ENCODE measurements at regions of chr22 and their contacts with region 1.

Region 1: GRCh38 chr22:39170825-39171622 is 18.5 kb upstream of the CBX7 start:
- DNase-seq: peak; percentile 53
- ATAC-seq: peak; percentile 96
- H3K4me3 ChIP-seq: no peak overlapping the region
- H3K27ac ChIP-seq: no peak overlapping the region
- H3K4me1 ChIP-seq: peaks cover 15% of the 10 kb centered on the region
- H3K27me3 ChIP-seq: no peaks in the 10 kb centered on the region; a peak in 1 of 4 replicates
- CTCF ChIP-seq: peak; percentile 90 to 94 (median 93); a peak in 5 of 6 replicates
- EP300 ChIP-seq: no peak
- POLR2A ChIP-seq: no peak
- RAD21 ChIP-seq: peak; percentile 95

Region 2: GRCh38 chr22:39215426-39216120 is 44.5 kb after region 1 on chr22:
- CTCF ChIA-PET with region 1: interaction called, 20 read pairs
- POLR2A ChIA-PET with region 1: no interaction called
- RAD21 ChIA-PET with region 1: no interaction called
- SMC1A ChIA-PET with region 1: no interaction called
- in situ Hi-C with region 1: no loop called
- intact Hi-C with region 1: no loop called
- DNase-seq: no peak
- ATAC-seq: peak; percentile 80
- H3K4me3 ChIP-seq: no peak overlapping the region
- H3K27ac ChIP-seq: no peak overlapping the region
- H3K4me1 ChIP-seq: no peaks in the 10 kb centered on the region
- H3K27me3 ChIP-seq: no peaks in the 10 kb centered on the region; a peak in 1 of 4 replicates
- CTCF ChIP-seq: peak; percentile 37 to 56 (median 47); a peak in 5 of 6 replicates
- EP300 ChIP-seq: no peak
- POLR2A ChIP-seq: no peak
- RAD21 ChIP-seq: peak; percentile 49

Region 3: DNA sequence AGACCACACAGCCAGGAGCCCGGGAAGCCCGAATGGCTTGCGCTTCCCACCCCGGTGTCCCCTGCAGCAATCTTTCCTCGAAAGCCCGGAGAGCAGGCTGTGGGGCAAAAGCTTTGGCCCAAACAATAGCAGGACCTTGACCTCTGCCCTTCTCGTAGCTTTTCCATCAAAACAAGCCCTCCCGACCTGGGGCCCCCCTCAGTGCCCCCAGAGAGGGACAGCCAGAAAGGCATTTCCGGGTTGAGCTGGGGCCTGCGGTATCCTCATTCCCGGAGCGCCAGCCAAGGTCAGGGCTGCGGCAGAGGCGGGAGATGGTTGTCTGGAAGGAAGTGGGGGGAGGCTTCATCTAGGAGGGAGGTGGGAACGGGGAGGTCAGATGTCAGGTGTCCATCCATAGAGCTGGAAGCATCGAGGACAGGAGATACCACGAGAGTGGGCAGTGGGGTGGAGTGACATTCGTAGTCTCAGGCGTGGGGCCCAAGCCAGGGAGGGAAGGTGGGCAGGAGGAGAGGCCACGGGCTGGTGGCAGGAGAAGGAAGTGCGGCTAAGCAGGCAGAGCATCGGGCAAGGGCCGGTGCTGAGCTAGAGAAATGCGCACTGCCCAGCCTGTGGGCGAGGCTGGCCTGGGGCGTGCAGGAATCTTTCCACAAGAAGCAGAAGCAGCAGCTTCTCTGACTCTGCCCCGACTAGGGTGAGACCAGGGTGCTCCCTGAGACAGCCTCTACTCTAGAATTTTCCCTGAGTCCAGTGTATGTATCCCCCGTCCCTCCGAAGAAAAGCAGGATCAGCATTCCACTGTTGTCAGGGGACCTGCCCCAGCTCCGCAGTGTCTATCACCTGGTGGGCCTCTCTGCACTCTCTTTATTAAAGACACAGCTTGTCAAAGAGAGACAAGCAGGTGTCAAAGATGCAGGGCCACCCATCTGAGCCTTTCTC is 59.5 kb after region 1 on chr22:
- CTCF ChIA-PET with region 1: interaction called, 12 read pairs
- POLR2A ChIA-PET with region 1: no interaction called
- RAD21 ChIA-PET with region 1: interaction called, 4 read pairs
- SMC1A ChIA-PET with region 1: interaction called, 3 read pairs
- in situ Hi-C with region 1: no loop called
- intact Hi-C with region 1: no loop called
- DNase-seq: no peak
- ATAC-seq: peak; percentile 17; the same call in 2 of the 3 replicates
- H3K4me3 ChIP-seq: no peak overlapping the region
- H3K27ac ChIP-seq: no peak overlapping the region
- H3K4me1 ChIP-seq: peaks cover 12% of the 10 kb centered on the region
- H3K27me3 ChIP-seq: no peaks in the 10 kb centered on the region; a peak in 1 of 4 replicates
- CTCF ChIP-seq: no peak
- EP300 ChIP-seq: no peak
- POLR2A ChIP-seq: no peak
- RAD21 ChIP-seq: no peak

Region 4: DNA sequence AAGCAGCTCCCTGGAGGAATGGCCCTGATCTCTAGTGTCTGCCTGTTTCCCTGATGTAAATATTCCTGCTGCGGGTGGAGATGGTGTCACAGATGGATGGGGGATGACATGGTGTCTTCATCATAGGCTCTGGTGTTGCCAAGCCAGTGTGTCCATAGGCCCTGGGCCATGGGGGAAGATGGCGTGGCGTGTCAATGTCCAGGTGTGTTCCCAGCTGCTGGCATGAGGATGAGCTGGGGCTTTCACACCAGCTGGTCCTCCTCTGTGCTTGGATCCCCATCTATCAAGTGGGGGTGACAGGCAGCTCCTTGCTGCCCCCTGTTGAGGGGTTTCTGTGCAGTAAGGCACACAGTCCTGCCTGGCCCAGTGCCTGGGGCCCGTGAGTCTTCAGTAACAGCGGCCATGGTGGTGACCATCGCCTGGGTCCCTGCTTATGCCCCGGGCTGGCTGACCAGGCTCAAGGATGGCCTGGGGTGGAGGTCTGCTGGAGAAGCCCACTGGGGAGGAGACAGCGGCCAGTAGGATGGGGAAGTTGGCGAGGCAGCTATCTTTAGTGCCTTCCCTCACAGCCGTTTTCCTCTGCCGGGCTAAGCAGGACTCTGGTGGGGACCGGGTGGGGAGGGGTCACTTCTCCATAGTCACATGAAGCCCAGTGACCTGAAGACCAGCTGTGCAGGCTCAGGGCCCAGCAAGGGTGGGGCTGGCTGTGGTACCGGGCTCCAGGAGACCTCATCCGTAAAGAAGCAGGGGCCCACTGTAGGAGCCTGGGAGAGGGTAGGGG is 135.7 kb after region 1 on chr22:
- CTCF ChIA-PET with region 1: interaction called, 100 read pairs
- POLR2A ChIA-PET with region 1: interaction called, 3 read pairs
- RAD21 ChIA-PET with region 1: interaction called, 45 read pairs
- SMC1A ChIA-PET with region 1: interaction called, 25 read pairs
- in situ Hi-C with region 1: loop called (anchors 5 kb)
- intact Hi-C with region 1: loop called (anchors 1 kb)
- DNase-seq: no peak
- ATAC-seq: peak; percentile 39; the same call in 2 of the 3 replicates
- H3K4me3 ChIP-seq: no peak overlapping the region
- H3K27ac ChIP-seq: no peak overlapping the region
- H3K4me1 ChIP-seq: peaks cover 10% of the 10 kb centered on the region
- H3K27me3 ChIP-seq: no peaks in the 10 kb centered on the region
- CTCF ChIP-seq: peak; percentile 55 to 66 (median 57)
- EP300 ChIP-seq: no peak
- POLR2A ChIP-seq: no peak
- RAD21 ChIP-seq: peak; percentile 78

Measured in GM12878 (cell line).